MCF 10A (cell line): ENCODE measurements at regions of chr1 and their contacts with region 1.

Region 1: GRCh38 chr1:158035976-158036583 is 42.6 kb downstream of the KIRREL1 start:
- DNase-seq: peak; percentile 68
- H3K4me3 Mint-ChIP-seq: no peak overlapping the region
- H3K27ac Mint-ChIP-seq: peak overlapping the region; percentile 77
- H3K4me1 Mint-ChIP-seq: peaks cover 45% of the 10 kb centered on the region
- H3K27me3 Mint-ChIP-seq: no peaks in the 10 kb centered on the region
- CTCF ChIP-seq: peak; percentile 92

Region 2: GRCh38 chr1:158013840-158014730 is 22.0 kb before region 1 on chr1:
- CTCF ChIA-PET with region 1: interaction called, 119 read pairs
- POLR2A ChIA-PET with region 1: interaction called, 79 read pairs
- intact Hi-C with region 1: no loop called
- DNase-seq: no peak
- H3K4me3 Mint-ChIP-seq: no peak overlapping the region
- H3K27ac Mint-ChIP-seq: peak overlapping the region; percentile 98
- H3K4me1 Mint-ChIP-seq: peaks cover 81% of the 10 kb centered on the region
- H3K27me3 Mint-ChIP-seq: no peaks in the 10 kb centered on the region
- CTCF ChIP-seq: no peak

Region 3: GRCh38 chr1:158055854-158056253 is 19.8 kb after region 1 on chr1:
- CTCF ChIA-PET with region 1: interaction called, 12 read pairs
- POLR2A ChIA-PET with region 1: interaction called, 3 read pairs
- intact Hi-C with region 1: no loop called
- DNase-seq: no peak
- H3K4me3 Mint-ChIP-seq: no peak overlapping the region
- H3K27ac Mint-ChIP-seq: no peak overlapping the region
- H3K4me1 Mint-ChIP-seq: peaks cover 27% of the 10 kb centered on the region
- H3K27me3 Mint-ChIP-seq: no peaks in the 10 kb centered on the region
- CTCF ChIP-seq: no peak

Region 4: GRCh38 chr1:158087320-158087927 is 51.3 kb after region 1 on chr1:
- CTCF ChIA-PET with region 1: interaction called, 39 read pairs
- POLR2A ChIA-PET with region 1: no interaction called
- intact Hi-C with region 1: loop called (anchors 1 kb)
- DNase-seq: peak; percentile 85
- H3K4me3 Mint-ChIP-seq: no peak overlapping the region
- H3K27ac Mint-ChIP-seq: no peak overlapping the region
- H3K4me1 Mint-ChIP-seq: no peaks in the 10 kb centered on the region
- H3K27me3 Mint-ChIP-seq: no peaks in the 10 kb centered on the region
- CTCF ChIP-seq: peak; percentile 98